IMR-90 (cell line): ENCODE measurements at regions of chr6 and their contacts with region 1.

Region 1: DNA sequence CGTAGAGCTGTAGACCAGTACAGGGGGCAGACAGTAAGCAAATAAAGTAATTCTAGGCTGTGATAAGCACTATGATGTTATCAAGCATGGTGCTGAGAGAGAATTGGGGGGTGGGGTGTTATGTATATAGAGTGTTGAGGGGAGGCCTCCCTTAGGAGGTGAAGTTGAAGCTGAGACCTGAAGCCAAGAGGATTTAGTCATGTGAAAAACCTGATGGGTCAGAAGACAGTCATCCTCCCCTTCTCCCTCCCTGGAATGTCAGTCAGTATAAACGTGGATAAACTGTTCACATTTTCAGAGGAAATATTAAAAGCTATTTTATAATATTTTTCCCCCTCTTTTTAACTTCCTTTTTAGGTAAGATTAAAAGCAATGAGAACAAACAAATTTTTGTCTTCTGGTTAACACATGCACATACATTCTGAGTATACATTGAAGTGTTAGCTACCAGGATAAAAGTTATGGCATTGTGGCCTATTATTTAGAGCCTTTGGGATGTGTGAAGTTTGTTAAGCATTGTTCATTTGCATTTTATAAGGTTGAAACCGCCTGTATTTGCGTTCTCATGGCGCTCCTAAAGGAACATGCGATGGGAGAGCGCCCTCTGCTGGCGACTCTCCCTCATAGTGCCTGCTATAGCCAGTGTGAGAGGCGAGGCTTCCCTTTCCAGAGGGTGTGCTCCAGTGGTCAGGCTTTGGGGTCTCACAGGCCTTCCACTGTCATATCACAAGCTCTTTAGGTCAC is 35.4 kb upstream of the MAPK13 start:
- DNase-seq: peak; percentile 71
- ATAC-seq: peak; percentile 96
- H3K4me3 ChIP-seq: no peak overlapping the region
- H3K27ac ChIP-seq: no peak overlapping the region
- H3K4me1 ChIP-seq: peaks cover 2% of the 10 kb centered on the region; the same call in 1 of the 2 replicates
- H3K27me3 ChIP-seq: no peaks in the 10 kb centered on the region
- CTCF ChIP-seq: peak; percentile 95
- POLR2A ChIP-seq: peak; percentile 51; the same call in 1 of the 2 replicates
- RAD21 ChIP-seq: peak; percentile 94

Region 2: DNA sequence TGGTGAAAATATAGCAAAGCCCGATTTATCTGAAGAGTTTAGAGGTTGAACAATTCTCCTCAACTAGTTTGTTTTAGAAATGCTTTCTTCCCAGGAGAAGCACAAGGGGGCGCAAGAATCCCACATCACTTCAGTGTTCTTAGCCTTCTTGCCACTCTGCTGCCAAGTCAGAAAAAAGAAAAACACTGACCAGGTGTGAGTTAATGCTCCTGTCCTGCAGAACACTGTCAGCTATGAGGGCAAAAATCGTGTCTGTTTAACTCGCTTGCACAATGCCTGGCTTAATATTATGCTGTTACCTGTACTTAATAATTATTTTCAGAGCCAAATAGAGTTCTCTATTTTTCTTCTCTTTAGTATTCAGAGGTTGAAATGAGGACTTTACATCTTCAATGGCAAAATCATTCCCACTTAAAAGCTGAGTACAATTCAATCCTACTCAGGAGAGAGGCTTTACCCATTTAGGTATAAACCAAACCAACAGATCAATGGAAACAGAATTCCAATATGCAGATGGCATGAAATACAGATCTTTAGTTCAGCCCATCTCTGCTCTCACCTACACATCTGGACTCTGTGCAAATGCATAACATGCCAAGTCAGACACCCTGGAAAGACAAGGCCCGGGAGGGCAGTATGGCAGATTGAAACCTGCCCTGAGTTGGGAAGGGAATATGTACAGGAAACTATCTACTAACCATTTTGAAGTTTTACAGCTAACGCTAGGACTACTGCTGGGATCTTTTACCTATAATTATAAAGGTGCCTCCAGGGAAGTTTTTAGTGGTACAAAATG is 510.8 kb before region 1 on chr6:
- CTCF ChIA-PET with region 1: no interaction called
- POLR2A ChIA-PET with region 1: no interaction called
- dilution Hi-C with region 1: no loop called
- in situ Hi-C with region 1: no loop called
- intact Hi-C with region 1: loop called (anchors 5 kb)
- DNase-seq: peak; percentile 77
- ATAC-seq: peak; percentile 72
- H3K4me3 ChIP-seq: no peak overlapping the region
- H3K27ac ChIP-seq: no peak overlapping the region
- H3K4me1 ChIP-seq: no peaks in the 10 kb centered on the region
- H3K27me3 ChIP-seq: no peaks in the 10 kb centered on the region
- CTCF ChIP-seq: peak; percentile 95
- POLR2A ChIP-seq: no peak
- RAD21 ChIP-seq: peak; percentile 95

Region 3: DNA sequence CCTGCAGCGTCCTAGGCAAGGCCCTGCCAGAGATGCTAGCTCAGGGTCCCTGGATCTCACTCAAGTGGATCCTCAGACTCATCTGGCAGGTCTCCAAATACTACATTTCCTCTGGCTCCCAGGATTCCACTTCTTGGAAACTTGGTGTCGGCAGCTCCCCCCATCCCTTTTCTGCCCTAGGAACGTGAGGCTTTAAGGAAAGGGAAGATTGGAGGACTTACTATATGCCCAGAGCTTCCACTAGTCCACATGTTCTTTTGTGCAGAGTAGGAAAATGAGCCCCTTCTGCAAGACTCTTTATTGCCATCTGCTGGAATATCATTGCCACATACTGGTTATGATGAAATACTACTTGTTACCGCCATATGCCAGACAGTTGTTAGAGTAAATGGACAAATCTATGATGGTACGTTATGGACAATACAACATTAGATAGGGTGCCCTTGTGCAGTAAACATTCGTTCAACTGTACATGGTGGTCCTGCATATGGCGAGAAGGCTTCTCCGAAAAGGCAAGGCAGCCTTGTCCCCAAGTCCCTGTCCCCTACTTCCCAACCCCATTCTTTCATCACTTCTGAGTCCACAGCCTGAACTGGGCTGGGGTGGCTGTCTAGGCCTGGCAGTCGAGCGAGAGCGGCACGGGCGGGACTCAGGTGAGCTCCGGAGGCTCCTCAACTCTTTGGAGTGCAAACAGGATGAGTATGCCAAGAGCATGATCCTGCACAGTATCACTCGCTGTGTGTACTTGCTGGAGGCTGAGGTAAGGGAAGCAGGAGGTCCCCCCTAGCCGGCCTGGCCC is 357.3 kb before region 1 on chr6:
- CTCF ChIA-PET with region 1: no interaction called
- POLR2A ChIA-PET with region 1: no interaction called
- dilution Hi-C with region 1: no loop called
- in situ Hi-C with region 1: no loop called
- intact Hi-C with region 1: loop called (anchors 1 kb)
- DNase-seq: peak; percentile 87
- ATAC-seq: peak; percentile 87
- H3K4me3 ChIP-seq: no peak overlapping the region
- H3K27ac ChIP-seq: no peak overlapping the region
- H3K4me1 ChIP-seq: no peaks in the 10 kb centered on the region
- H3K27me3 ChIP-seq: peaks cover 1% of the 10 kb centered on the region; the same call in 1 of the 2 replicates
- CTCF ChIP-seq: peak; percentile 91
- POLR2A ChIP-seq: no peak
- RAD21 ChIP-seq: peak; percentile 93

Region 4: DNA sequence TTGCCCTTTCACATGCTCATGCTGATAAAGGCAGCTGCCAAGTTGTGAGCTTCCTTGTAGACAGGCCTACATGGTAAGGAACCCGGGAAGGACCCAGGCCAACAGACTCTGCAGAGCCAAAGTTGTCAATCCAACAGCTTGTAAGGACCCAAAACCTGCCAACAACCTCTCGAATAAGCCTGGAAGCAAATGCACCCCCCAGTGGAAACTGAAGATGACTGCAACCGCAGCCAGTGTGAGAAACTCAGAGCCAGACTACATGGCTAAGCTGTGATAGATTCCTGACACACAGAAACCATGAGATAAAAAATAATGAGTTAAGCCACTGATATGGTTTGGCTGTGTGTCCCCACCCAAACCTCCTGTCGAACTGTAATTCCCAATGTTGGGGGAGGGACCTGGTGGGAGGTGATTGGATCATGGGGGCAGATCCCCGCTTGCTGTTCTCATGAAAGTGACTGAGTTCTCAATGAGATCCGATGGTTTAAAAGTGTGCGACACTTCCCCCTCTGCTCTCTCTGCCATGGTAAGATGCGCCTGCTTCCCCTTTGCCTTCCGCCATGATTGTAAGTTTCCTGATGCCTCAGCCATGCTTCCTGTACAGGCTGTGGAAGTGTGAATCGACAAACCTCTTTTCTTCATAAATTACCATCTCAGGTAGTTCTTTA is 337.3 kb before region 1 on chr6:
- CTCF ChIA-PET with region 1: no interaction called
- POLR2A ChIA-PET with region 1: no interaction called
- dilution Hi-C with region 1: no loop called
- in situ Hi-C with region 1: no loop called
- intact Hi-C with region 1: loop called (anchors 5 kb)
- DNase-seq: peak; percentile 28
- ATAC-seq: peak; percentile 59; the same call in 1 of the 2 replicates
- H3K4me3 ChIP-seq: no peak overlapping the region
- H3K27ac ChIP-seq: no peak overlapping the region
- H3K4me1 ChIP-seq: no peaks in the 10 kb centered on the region
- H3K27me3 ChIP-seq: peaks cover 15% of the 10 kb centered on the region
- CTCF ChIP-seq: peak; percentile 29; the same call in 1 of the 2 replicates
- POLR2A ChIP-seq: no peak
- RAD21 ChIP-seq: 0 out of 2 replicates have a peak, but pooled peaks have one; percentile 6

Region 5: GRCh38 chr6:35850208-35850607 is 244.7 kb before region 1 on chr6:
- CTCF ChIA-PET with region 1: no interaction called
- POLR2A ChIA-PET with region 1: no interaction called
- dilution Hi-C with region 1: no loop called
- in situ Hi-C with region 1: no loop called
- intact Hi-C with region 1: loop called (anchors 10 kb)
- DNase-seq: no peak
- ATAC-seq: no peak
- H3K4me3 ChIP-seq: no peak overlapping the region
- H3K27ac ChIP-seq: no peak overlapping the region
- H3K4me1 ChIP-seq: no peaks in the 10 kb centered on the region
- H3K27me3 ChIP-seq: no peaks in the 10 kb centered on the region
- CTCF ChIP-seq: no peak
- POLR2A ChIP-seq: no peak
- RAD21 ChIP-seq: no peak

Region 6: GRCh38 chr6:35920793-35921732 is 173.9 kb before region 1 on chr6 and contains the start of gene SRPK1:
- CTCF ChIA-PET with region 1: no interaction called
- POLR2A ChIA-PET with region 1: no interaction called
- dilution Hi-C with region 1: no loop called
- in situ Hi-C with region 1: no loop called
- intact Hi-C with region 1: loop called (anchors 10 kb)
- DNase-seq: peak; percentile 74
- ATAC-seq: peak; percentile 93
- H3K4me3 ChIP-seq: peak within 1 kb of the TSS; percentile 88
- H3K27ac ChIP-seq: peak within 1 kb of the TSS; percentile 67
- H3K4me1 ChIP-seq: no peaks in the 10 kb centered on the region; the same call in 1 of the 2 replicates
- H3K27me3 ChIP-seq: no peaks in the 10 kb centered on the region
- CTCF ChIP-seq: no peak
- POLR2A ChIP-seq: peak; percentile 48; the same call in 1 of the 2 replicates
- RAD21 ChIP-seq: no peak
- total RNA-seq, gene SRPK1: 44.6 and 92.8 TPM in 2 replicates

Region 7: GRCh38 chr6:35980991-35981660 is 113.8 kb before region 1 on chr6:
- CTCF ChIA-PET with region 1: no interaction called
- POLR2A ChIA-PET with region 1: no interaction called
- dilution Hi-C with region 1: no loop called
- in situ Hi-C with region 1: no loop called
- intact Hi-C with region 1: no loop called
- DNase-seq: peak; percentile 11
- ATAC-seq: no peak
- H3K4me3 ChIP-seq: no peak overlapping the region
- H3K27ac ChIP-seq: no peak overlapping the region
- H3K4me1 ChIP-seq: no peaks in the 10 kb centered on the region
- H3K27me3 ChIP-seq: peaks cover 11% of the 10 kb centered on the region
- CTCF ChIP-seq: no peak
- POLR2A ChIP-seq: no peak
- RAD21 ChIP-seq: no peak

Region 8: DNA sequence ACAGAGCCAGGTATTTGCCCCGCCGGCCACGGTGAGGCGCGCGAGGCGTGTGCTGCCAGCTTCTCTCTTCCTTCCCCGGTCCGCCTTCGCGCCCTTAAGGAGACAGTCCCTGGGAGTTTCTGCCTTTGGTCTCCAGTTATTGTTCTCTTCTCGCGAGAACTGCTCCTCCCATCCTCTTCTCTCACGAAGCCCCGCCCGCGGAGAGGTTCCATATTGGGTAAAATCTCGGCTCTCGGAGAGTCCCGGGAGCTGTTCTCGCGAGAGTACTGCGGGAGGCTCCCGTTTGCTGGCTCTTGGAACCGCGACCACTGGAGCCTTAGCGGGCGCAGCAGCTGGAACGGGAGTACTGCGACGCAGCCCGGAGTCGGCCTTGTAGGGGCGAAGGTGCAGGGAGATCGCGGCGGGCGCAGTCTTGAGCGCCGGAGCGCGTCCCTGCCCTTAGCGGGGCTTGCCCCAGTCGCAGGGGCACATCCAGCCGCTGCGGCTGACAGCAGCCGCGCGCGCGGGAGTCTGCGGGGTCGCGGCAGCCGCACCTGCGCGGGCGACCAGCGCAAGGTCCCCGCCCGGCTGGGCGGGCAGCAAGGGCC is 67.3 kb before region 1 on chr6 and contains the start of gene MAPK14:
- CTCF ChIA-PET with region 1: interaction called, 28 read pairs
- POLR2A ChIA-PET with region 1: interaction called, 5 read pairs
- dilution Hi-C with region 1: no loop called
- in situ Hi-C with region 1: loop called (anchors 5 kb)
- intact Hi-C with region 1: loop called (anchors 1 kb)
- DNase-seq: peak; percentile 100
- ATAC-seq: peak; percentile 85
- H3K4me3 ChIP-seq: peak within 1 kb of the TSS; percentile 65
- H3K27ac ChIP-seq: peak within 1 kb of the TSS; percentile 94
- H3K4me1 ChIP-seq: peaks cover 6% of the 10 kb centered on the region; the same call in 1 of the 2 replicates
- H3K27me3 ChIP-seq: no peaks in the 10 kb centered on the region
- CTCF ChIP-seq: peak; percentile 95
- POLR2A ChIP-seq: peak; percentile 88
- RAD21 ChIP-seq: peak; percentile 88
- total RNA-seq, gene MAPK14: 69.7 and 74.4 TPM in 2 replicates

Region 9: GRCh38 chr6:36204068-36204753 is 109.3 kb after region 1 on chr6:
- CTCF ChIA-PET with region 1: no interaction called
- POLR2A ChIA-PET with region 1: no interaction called
- dilution Hi-C with region 1: no loop called
- in situ Hi-C with region 1: no loop called
- intact Hi-C with region 1: no loop called
- DNase-seq: no peak
- ATAC-seq: no peak
- H3K4me3 ChIP-seq: no peak overlapping the region
- H3K27ac ChIP-seq: no peak overlapping the region
- H3K4me1 ChIP-seq: no peaks in the 10 kb centered on the region
- H3K27me3 ChIP-seq: no peaks in the 10 kb centered on the region
- CTCF ChIP-seq: no peak
- POLR2A ChIP-seq: no peak
- RAD21 ChIP-seq: no peak